ENCODE measurements at regions of chr13 and their contacts with region 1.

Region 1: DNA sequence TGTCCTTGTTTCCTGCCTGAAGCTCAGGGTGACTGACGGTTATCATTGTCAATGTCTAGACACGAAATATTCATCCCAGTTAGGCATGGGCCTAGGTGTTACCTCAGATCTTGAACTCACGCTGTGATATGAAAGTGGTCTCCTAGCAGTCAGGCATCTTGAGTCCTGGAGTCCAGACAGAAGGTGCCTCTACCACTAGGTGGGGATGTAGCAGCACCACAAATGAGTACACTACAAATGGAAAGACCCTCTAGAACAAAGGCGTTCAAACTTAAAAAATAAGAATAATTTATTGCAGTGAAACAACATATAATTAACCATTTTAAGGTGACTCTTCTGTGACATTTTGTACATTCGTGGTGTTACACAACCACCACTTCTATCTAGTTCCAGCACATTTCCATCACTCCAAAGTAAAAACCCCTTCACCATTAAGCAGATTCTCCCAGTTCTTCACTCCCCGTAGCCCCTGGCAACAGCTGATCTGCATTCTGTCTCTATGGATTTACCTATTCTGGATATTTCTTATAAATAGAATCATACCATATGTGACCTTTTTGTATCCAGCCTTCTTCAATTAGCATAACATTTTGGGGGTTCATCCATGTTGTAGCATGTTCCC is 11.9 kb upstream of the FRY start:
- DNase-seq: peak; percentile 70
- CTCF ChIP-seq: peak; percentile 88

Region 2: DNA sequence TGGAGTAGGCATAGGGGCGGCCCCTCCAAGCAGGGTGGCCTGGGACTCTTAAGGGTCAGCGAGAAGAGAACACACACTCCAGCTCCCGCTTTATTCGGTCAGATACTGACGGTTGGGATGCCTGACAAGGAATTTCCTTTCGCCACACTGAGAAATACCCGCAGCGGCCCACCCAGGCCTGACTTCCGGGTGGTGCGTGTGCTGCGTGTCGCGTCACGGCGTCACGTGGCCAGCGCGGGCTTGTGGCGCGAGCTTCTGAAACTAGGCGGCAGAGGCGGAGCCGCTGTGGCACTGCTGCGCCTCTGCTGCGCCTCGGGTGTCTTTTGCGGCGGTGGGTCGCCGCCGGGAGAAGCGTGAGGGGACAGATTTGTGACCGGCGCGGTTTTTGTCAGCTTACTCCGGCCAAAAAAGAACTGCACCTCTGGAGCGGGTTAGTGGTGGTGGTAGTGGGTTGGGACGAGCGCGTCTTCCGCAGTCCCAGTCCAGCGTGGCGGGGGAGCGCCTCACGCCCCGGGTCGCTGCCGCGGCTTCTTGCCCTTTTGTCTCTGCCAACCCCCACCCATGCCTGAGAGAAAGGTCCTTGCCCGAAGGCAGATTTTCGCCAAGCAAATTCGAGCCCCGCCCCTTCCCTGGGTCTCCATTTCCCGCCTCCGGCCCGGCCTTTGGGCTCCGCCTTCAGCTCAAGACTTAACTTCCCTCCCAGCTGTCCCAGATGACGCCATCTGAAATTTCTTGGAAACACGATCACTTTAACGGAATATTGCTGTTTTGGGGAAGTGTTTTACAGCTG is 295.7 kb after region 1 on chr13 and contains the starts of genes BRCA2 and ZAR1L:
- in situ Hi-C with region 1: loop called (anchors 10 kb)
- DNase-seq: peak; percentile 84
- CTCF ChIP-seq: no peak

Measured in GM13977 (cell line).